Ovary (tissue), 10 donors: ENCODE measurements at regions of chr10 and their contacts with region 1.

Region 1: GRCh38 chr10:70528726-70529362 is 50.3 kb downstream of the PALD1 start:
- DNase-seq: no peak
- H3K4me3 ChIP-seq: no peak overlapping the region
- H3K27ac ChIP-seq: no peak overlapping the region
- H3K4me1 ChIP-seq: peaks cover under 1% of the 10 kb centered on the region
- H3K27me3 ChIP-seq: no peaks in the 10 kb centered on the region
- CTCF ChIP-seq: no peak
- EP300 ChIP-seq: no peak
- POLR2A ChIP-seq: no peak

Region 2: GRCh38 chr10:70500812-70501301 is 28.0 kb before region 1 on chr10:
- intact Hi-C with region 1: loop called in 1 of 4 experiments (anchors 1 kb)
- DNase-seq: no peak
- H3K4me3 ChIP-seq: no peak overlapping the region
- H3K27ac ChIP-seq: no peak overlapping the region
- H3K4me1 ChIP-seq: peaks cover 10% of the 10 kb centered on the region
- H3K27me3 ChIP-seq: no peaks in the 10 kb centered on the region
- CTCF ChIP-seq: no peak
- EP300 ChIP-seq: no peak
- POLR2A ChIP-seq: no peak